ENCODE measurements at regions of chr18 and their contacts with region 1.

Region 1: GRCh38 chr18:63249771-63250170 is 69.8 kb downstream of the BCL2 start:
- DNase-seq: peak; percentile 49 to 80 (median 63)
- H3K4me3 ChIP-seq: peak overlapping the region in 2 of 3 experiments; percentile 33 to 54
- H3K4me3 Mint-ChIP-seq: peak overlapping the region; percentile 53 to 75
- H3K27ac ChIP-seq: peak overlapping the region; percentile 76 to 89
- H3K27ac Mint-ChIP-seq: peak overlapping the region; percentile 90 to 96 (median 93)
- H3K4me1 ChIP-seq: peaks cover 74 to 88% of the 10 kb centered on the region in 2 donors
- H3K4me1 Mint-ChIP-seq: peaks cover 79% of the 10 kb centered on the region
- H3K27me3 ChIP-seq: no peaks in the 10 kb centered on the region
- H3K27me3 Mint-ChIP-seq: no peaks in the 10 kb centered on the region
- CTCF ChIP-seq: no peak

Region 2: GRCh38 chr18:63292831-63293683 is 43.3 kb after region 1 on chr18:
- intact Hi-C with region 1: loop called in 1 of 2 experiments (anchors 10 kb)
- DNase-seq: peak; percentile 44 to 68 (median 48)
- H3K4me3 ChIP-seq: peak overlapping the region in 1 of 3 experiments; percentile 35
- H3K4me3 Mint-ChIP-seq: peak overlapping the region; percentile 17 to 64
- H3K27ac ChIP-seq: peak overlapping the region; percentile 5 to 54
- H3K27ac Mint-ChIP-seq: peak overlapping the region in 6 of 7 donors; percentile 15 to 80 (median 51)
- H3K4me1 ChIP-seq: peaks cover 14 to 19% of the 10 kb centered on the region in 2 donors
- H3K4me1 Mint-ChIP-seq: peaks cover 33% of the 10 kb centered on the region
- H3K27me3 ChIP-seq: no peaks in the 10 kb centered on the region
- H3K27me3 Mint-ChIP-seq: no peaks in the 10 kb centered on the region
- CTCF ChIP-seq: no peak

Region 3: GRCh38 chr18:63307551-63308200 is 57.9 kb after region 1 on chr18:
- intact Hi-C with region 1: no loop called
- DNase-seq: no peak
- H3K4me3 ChIP-seq: no peak overlapping the region
- H3K4me3 Mint-ChIP-seq: no peak overlapping the region
- H3K27ac ChIP-seq: no peak overlapping the region
- H3K27ac Mint-ChIP-seq: no peak overlapping the region
- H3K4me1 ChIP-seq: peaks cover 21 to 28% of the 10 kb centered on the region in 2 donors
- H3K4me1 Mint-ChIP-seq: peaks cover 32% of the 10 kb centered on the region
- H3K27me3 ChIP-seq: no peaks in the 10 kb centered on the region
- H3K27me3 Mint-ChIP-seq: peaks cover 0 to 4% (median 2%) of the 10 kb centered on the region in 3 donors
- CTCF ChIP-seq: no peak

Measured in CD14-positive monocyte (primary cell).